ENCODE measurements at regions of chr12 and their contacts with region 1.

Region 1: GRCh38 chr12:93419388-93420034 is 22.2 kb downstream of the UBE2N start:
- DNase-seq: no peak
- H3K4me3 Mint-ChIP-seq: no peak overlapping the region
- H3K27ac Mint-ChIP-seq: peak overlapping the region; percentile 3
- H3K4me1 Mint-ChIP-seq: peaks cover 73% of the 10 kb centered on the region
- H3K27me3 Mint-ChIP-seq: no peaks in the 10 kb centered on the region

Region 2: DNA sequence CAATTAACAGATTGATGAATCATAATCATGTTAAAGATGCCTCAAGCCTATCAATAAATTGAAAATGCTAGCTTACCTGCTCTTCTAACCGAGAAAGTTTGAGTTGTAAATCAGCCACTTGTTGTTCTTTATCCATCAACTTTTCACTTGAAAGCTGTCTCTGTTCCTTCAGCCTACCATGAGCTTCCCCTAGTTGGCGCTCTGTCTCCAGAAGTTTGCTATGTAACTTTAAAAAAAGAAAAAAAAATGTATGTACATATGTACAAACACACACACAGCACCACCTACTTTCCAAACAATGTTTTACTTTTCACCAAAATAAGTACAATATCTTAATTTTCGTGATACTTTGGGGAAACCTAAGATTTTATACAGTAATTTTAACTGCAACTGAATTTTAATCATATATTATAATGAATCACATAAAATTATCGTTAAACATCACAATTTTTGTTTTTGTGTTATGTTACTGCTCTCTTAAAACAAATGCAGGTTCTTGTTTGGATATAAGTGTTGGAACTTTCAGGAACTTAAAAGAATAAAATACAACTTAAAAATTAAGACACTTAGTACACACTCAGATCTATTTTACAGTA is 591.6 kb before region 1 on chr12:
- intact Hi-C with region 1: loop called (anchors 5 kb)
- DNase-seq: no peak
- H3K4me3 Mint-ChIP-seq: no peak overlapping the region
- H3K27ac Mint-ChIP-seq: no peak overlapping the region
- H3K4me1 Mint-ChIP-seq: no peaks in the 10 kb centered on the region
- H3K27me3 Mint-ChIP-seq: no peaks in the 10 kb centered on the region

Region 3: GRCh38 chr12:93025145-93025805 is 394.2 kb before region 1 on chr12:
- intact Hi-C with region 1: loop called (anchors 1 kb)
- DNase-seq: no peak
- H3K4me3 Mint-ChIP-seq: no peak overlapping the region
- H3K27ac Mint-ChIP-seq: no peak overlapping the region
- H3K4me1 Mint-ChIP-seq: no peaks in the 10 kb centered on the region
- H3K27me3 Mint-ChIP-seq: peaks cover 2% of the 10 kb centered on the region

Region 4: DNA sequence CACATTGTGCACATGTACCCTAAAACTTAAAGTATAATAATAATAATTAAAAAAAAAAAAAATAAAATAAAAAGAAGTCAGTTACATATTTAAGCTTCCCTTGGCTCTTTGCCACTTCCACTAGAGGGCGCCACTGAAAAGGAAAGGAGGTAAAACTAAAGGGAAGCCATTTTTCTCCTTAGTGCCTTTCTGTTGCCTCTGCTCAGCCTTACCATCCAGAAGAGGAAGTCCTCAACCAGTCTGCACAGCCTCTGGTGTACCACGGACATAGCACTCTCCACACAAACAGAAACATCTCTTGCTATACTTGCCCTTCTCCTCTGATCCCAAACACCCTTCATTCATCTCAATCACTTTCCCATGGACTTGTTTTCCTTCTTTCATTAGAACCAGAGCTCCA is 321.4 kb before region 1 on chr12:
- intact Hi-C with region 1: loop called (anchors 2 kb)
- DNase-seq: peak; percentile 56
- H3K4me3 Mint-ChIP-seq: no peak overlapping the region
- H3K27ac Mint-ChIP-seq: no peak overlapping the region
- H3K4me1 Mint-ChIP-seq: peaks cover 6% of the 10 kb centered on the region
- H3K27me3 Mint-ChIP-seq: no peaks in the 10 kb centered on the region

Region 5: GRCh38 chr12:93167841-93168492 is 251.5 kb before region 1 on chr12:
- intact Hi-C with region 1: loop called (anchors 5 kb)
- DNase-seq: peak; percentile 6
- H3K4me3 Mint-ChIP-seq: peak overlapping the region; percentile 37
- H3K27ac Mint-ChIP-seq: peak overlapping the region; percentile 18
- H3K4me1 Mint-ChIP-seq: peaks cover 18% of the 10 kb centered on the region
- H3K27me3 Mint-ChIP-seq: peaks cover 2% of the 10 kb centered on the region

Region 6: GRCh38 chr12:93441617-93442410 is 22.3 kb after region 1 on chr12 and contains the start of gene UBE2N:
- intact Hi-C with region 1: loop called (anchors 1 kb)
- DNase-seq: peak; percentile 95
- H3K4me3 Mint-ChIP-seq: peak within 1 kb of the TSS; percentile 96
- H3K27ac Mint-ChIP-seq: peak within 1 kb of the TSS; percentile 99
- H3K4me1 Mint-ChIP-seq: peaks cover 51% of the 10 kb centered on the region
- H3K27me3 Mint-ChIP-seq: no peaks in the 10 kb centered on the region
- total RNA-seq, gene UBE2N: 231 and 239 TPM in 2 replicates

Region 7: GRCh38 chr12:93467351-93468007 is 48.0 kb after region 1 on chr12 and contains the start of gene MRPL42:
- intact Hi-C with region 1: loop called (anchors 1 kb)
- DNase-seq: peak; percentile 90
- H3K4me3 Mint-ChIP-seq: peak within 1 kb of the TSS; percentile 96
- H3K27ac Mint-ChIP-seq: peak within 1 kb of the TSS; percentile 93
- H3K4me1 Mint-ChIP-seq: peaks cover 43% of the 10 kb centered on the region
- H3K27me3 Mint-ChIP-seq: no peaks in the 10 kb centered on the region
- total RNA-seq, gene MRPL42: 83.2 and 87.0 TPM in 2 replicates

Measured in activated T-helper 1 cell treated with anti-CD3 and anti-CD28 coated beads, Interleukin-12 subunit alpha, Interleukin-12 subunit beta, Interleukin-2, Interleukin-4 antibody, amounts not matched to agents 30 ng/mL and 10 ng/mL and 1 ng/mL, durations not matched to agents 14 hours and 24 hours and 36 hours (primary cell).